ENCODE measurements at regions of chr2 and their contacts with region 1.

Region 1: DNA sequence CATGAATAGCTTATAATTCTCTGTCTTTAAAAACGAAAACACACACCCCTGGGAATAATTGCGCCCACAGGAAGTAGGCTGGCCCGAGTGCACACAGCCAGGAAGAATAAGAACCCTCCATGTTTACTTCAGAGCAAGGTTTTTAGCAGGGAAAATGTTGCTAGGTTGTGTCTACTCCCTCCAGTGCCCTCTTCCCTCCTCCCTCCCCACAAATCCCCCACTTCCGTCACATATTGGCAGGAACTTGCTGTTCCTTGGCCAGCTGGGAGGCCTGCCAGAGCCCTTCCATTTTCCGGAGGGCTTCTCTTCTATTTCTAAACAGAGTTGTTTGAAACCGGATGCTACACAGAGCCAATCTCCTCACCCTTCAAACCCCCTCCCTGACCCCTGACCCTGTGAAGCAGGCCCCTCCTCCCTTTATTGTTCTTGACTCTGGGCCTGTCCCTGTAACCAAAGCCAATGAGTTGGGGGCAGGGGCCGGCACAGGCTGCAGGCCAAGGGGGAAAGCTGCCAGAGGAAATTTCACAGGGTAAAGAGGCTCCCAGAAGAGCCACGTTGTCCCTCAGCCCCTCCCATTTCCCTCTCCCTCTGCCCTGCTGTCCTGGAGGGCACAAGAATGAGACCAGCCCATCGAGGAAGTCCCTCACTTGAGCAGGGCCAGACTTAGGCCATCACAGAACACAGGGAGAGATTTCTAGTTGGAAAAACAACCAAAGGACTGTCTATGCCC is 49.8 kb upstream of the LGALSL start:
- DNase-seq: peak; percentile 99
- H3K4me3 ChIP-seq: peak overlapping the region in 1 of 3 experiments; percentile 26
- H3K27ac ChIP-seq: peak overlapping the region; percentile 72
- H3K4me1 ChIP-seq: peaks cover 35% of the 10 kb centered on the region
- H3K27me3 ChIP-seq: peaks cover 7 to 17% of the 10 kb centered on the region in 2 experiments
- CTCF ChIP-seq: no peak
- POLR2A ChIP-seq: no peak

Region 2: DNA sequence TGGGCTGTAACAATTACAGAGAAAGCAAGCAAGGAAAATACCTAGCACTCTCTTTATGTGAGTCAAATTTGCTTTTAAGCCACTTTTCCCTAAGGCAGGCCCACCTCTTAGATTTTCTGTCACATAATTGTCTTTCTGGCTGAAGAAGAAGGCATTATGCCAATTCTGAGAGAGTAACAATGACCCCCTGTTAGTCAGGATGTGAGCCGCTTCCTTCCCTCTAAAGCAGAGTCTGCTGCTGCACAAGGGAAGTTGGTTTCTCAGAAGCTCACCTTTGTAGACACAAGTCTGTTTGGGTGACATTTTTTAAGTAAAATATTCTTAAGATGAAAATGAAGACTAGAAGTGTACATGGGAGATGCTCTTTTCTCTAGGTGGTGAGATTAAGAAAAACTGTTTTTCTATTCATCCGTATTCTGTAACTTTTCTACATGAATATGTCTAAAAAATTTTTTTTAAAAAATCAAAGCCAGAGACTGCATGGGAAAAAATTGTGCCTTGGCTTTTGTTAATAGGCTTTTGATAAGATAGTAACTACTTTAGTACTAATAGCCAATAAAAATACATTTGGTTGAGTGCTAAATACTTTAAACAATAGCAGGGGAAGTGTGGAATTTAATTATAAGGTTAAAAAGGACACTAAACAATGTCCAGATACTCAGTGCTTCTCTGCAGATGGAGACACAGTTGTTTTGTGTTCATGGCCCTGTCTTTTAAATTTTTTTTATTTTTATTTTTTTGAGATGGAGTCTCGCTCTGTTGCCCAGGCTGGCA is 351.5 kb before region 1 on chr2:
- CTCF ChIA-PET with region 1: no interaction called
- POLR2A ChIA-PET with region 1: no interaction called
- dilution Hi-C with region 1: no loop called
- intact Hi-C with region 1: loop called (anchors 1 kb)
- DNase-seq: peak; percentile 94
- H3K4me3 ChIP-seq: peak overlapping the region in 1 of 3 experiments; percentile 20
- H3K27ac ChIP-seq: peak overlapping the region; percentile 96
- H3K4me1 ChIP-seq: peaks cover 28% of the 10 kb centered on the region
- H3K27me3 ChIP-seq: no peaks in the 10 kb centered on the region
- CTCF ChIP-seq: no peak
- POLR2A ChIP-seq: no peak

Region 3: GRCh38 chr2:64192125-64192479 is 212.1 kb before region 1 on chr2:
- CTCF ChIA-PET with region 1: no interaction called
- POLR2A ChIA-PET with region 1: no interaction called
- dilution Hi-C with region 1: no loop called
- intact Hi-C with region 1: no loop called
- DNase-seq: no peak
- H3K4me3 ChIP-seq: no peak overlapping the region
- H3K27ac ChIP-seq: no peak overlapping the region
- H3K4me1 ChIP-seq: no peaks in the 10 kb centered on the region
- H3K27me3 ChIP-seq: peaks cover 0 to 2% of the 10 kb centered on the region in 2 experiments
- CTCF ChIP-seq: no peak
- POLR2A ChIP-seq: no peak

Region 4: DNA sequence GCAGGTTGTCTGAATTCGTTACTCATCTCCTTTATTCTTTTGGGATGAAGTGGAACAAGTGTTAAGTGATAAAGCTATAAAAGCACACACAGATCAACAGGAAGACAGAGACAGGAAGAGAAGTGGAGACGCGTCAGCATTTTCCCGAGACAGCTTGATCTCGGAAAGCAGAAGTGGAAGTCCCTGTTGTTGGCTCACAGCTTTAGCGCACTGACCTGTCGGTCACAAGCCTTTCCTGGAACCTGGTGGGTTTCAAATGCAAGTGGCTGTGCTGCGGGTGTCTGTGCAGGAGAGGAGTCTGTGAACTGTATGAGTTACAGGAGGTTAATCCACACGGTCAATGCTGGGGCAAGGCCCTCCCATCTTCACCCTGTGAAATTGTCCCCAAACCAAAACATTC is 143.3 kb before region 1 on chr2:
- CTCF ChIA-PET with region 1: no interaction called
- POLR2A ChIA-PET with region 1: no interaction called
- dilution Hi-C with region 1: no loop called
- intact Hi-C with region 1: loop called (anchors 1 kb)
- DNase-seq: peak; percentile 82
- H3K4me3 ChIP-seq: peak overlapping the region in 1 of 3 experiments; percentile 2
- H3K27ac ChIP-seq: peak overlapping the region; percentile 99
- H3K4me1 ChIP-seq: peaks cover 44% of the 10 kb centered on the region
- H3K27me3 ChIP-seq: no peaks in the 10 kb centered on the region
- CTCF ChIP-seq: no peak
- POLR2A ChIP-seq: peak; percentile 48

Region 5: DNA sequence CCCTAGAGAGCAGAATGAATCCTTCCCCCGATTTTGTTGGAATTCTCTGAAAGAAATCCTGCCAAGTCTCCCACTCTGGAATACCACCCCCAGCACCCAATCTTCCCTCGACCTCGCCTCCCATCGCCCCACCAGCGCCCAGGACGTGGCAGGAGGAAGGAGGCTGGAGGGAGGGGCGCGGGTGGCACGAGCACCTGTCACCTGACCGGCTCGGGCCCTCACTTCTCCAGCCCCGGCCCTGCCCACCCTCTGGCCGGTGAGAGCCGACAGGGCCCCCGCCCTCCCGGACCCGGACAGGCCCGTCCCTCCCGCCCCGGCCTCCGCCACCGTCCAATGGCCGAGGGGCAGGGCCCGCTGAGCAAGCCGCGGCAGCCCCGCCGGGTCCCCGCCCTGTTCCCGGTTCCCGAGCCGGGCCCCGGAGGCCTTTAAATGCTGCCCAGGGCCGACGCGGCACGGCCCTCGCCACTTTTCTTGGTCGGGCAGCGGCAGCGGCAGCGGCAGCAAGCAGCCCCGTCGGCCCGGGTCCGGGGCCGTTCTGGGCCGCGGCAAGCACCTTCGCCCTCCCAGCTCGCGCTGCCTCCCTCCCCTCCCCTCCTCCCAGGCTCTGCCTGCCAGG is 49.7 kb after region 1 on chr2 and contains the start of gene LGALSL:
- CTCF ChIA-PET with region 1: interaction called, 8 read pairs
- POLR2A ChIA-PET with region 1: no interaction called
- dilution Hi-C with region 1: no loop called
- intact Hi-C with region 1: loop called (anchors 1 kb)
- DNase-seq: peak; percentile 66
- H3K4me3 ChIP-seq: peak within 1 kb of the TSS; percentile 60 to 93 (median 65)
- H3K27ac ChIP-seq: peak within 1 kb of the TSS; percentile 65
- H3K4me1 ChIP-seq: peaks cover 8% of the 10 kb centered on the region
- H3K27me3 ChIP-seq: peaks cover under 1 to 4% of the 10 kb centered on the region in 2 experiments
- CTCF ChIP-seq: no peak
- POLR2A ChIP-seq: no peak
- total RNA-seq, gene LGALSL: 2.3 and 5.8 TPM in 2 replicates

Region 6: DNA sequence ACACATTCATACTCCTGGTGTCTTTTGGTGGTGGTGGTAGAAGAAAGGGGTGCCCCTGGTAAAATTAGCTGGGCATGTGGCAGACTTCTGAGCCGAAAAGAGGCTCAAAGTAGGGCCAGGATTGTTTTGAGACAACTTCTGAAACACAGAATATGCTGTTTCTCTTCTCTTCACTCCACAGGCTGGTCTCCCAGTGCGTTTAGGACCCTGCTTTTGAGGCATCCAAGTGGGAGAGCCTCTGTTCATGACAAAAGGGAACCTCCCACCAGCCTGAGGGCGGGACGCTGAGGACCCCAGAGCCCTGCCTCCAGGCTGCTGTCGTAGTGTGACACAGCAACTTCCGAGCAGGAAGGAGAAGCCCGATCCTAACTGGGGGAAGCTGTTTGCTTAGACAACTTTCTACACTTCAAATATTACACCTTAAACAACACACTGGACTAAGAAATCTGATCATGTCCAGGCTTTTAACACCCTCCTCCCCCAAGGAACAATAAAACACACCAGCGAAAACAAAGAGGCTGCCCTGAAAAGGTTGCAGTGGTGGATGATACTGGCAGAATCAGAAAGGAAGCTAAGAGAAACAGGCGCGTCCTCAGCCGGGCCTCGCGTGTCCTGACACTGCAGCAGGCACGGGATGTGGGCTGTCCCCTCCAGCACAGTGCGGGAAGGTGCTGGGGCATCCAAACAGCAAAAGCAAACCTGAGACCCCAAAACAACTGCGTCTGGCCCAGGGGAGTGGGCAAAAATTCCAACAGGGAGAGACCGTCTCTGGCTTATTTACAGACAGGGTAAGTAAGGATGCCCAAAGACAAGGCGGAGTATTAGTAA is 240.2 kb after region 1 on chr2:
- CTCF ChIA-PET with region 1: no interaction called
- POLR2A ChIA-PET with region 1: no interaction called
- dilution Hi-C with region 1: no loop called
- intact Hi-C with region 1: no loop called
- DNase-seq: peak; percentile 84
- H3K4me3 ChIP-seq: peak overlapping the region; percentile 3 to 53 (median 30)
- H3K27ac ChIP-seq: peak overlapping the region; percentile 87
- H3K4me1 ChIP-seq: peaks cover 29% of the 10 kb centered on the region
- H3K27me3 ChIP-seq: no peaks in the 10 kb centered on the region
- CTCF ChIP-seq: no peak
- POLR2A ChIP-seq: no peak

Region 7: GRCh38 chr2:64873472-64873924 is 469.3 kb after region 1 on chr2:
- CTCF ChIA-PET with region 1: no interaction called
- POLR2A ChIA-PET with region 1: no interaction called
- dilution Hi-C with region 1: no loop called
- intact Hi-C with region 1: loop called (anchors 5 kb)
- DNase-seq: peak; percentile 63
- H3K4me3 ChIP-seq: no peak overlapping the region
- H3K27ac ChIP-seq: no peak overlapping the region
- H3K4me1 ChIP-seq: peaks cover 10% of the 10 kb centered on the region
- H3K27me3 ChIP-seq: no peaks in the 10 kb centered on the region
- CTCF ChIP-seq: peak; percentile 95 to 96
- POLR2A ChIP-seq: no peak

Region 8: DNA sequence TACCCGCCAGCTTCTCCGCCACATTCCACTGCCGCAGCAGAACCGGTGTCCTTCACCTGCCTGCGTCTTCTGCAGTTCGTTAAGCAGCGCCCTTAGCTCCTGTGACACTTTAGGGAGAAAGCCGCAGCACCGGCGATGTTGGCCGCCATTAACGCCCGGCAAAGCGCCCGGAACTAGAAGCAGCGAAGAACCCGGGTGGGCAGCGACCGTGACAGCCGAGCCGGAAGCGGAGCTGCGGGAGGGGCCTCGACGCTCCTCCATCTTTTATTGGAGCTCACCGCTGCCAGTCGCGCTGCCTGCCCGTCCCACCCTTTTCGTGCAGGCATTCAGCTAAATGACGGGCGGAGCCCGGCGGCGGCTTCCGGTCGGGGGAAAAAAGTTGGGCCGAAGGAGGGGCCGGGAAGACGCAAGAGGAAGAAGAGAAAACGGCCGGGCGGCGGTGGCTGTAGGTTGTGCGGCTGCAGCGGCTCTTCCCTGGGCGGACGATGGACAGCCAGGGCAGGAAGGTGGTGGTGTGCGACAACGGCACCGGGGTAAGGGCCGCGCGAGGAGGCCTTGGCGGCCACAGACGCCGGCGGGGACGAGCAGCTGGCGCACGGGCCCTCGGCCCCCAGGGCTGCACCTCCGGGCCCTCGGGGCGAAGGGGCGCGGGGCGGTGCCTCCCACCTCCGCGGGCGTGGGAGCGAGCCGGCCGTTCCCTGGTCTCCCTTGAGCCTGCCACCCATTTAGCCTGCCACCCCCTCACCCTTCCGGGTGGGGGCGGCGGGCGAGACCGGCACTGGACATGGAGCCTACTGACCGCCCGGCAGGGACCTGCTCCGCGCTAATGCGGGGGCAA is 823.5 kb after region 1 on chr2 and contains the start of gene ACTR2:
- CTCF ChIA-PET with region 1: no interaction called
- POLR2A ChIA-PET with region 1: no interaction called
- dilution Hi-C with region 1: no loop called
- intact Hi-C with region 1: no loop called
- DNase-seq: peak; percentile 97
- H3K4me3 ChIP-seq: peak within 1 kb of the TSS; percentile 67 to 90 (median 74)
- H3K27ac ChIP-seq: peak within 1 kb of the TSS; percentile 80
- H3K4me1 ChIP-seq: peaks cover 31% of the 10 kb centered on the region
- H3K27me3 ChIP-seq: no peaks in the 10 kb centered on the region
- CTCF ChIP-seq: no peak
- POLR2A ChIP-seq: peak; percentile 87
- total RNA-seq, gene ACTR2: 287 and 301 TPM in 2 replicates

Measured in endothelial cell of umbilical vein (primary cell).